AG04450 (cell line): ENCODE measurements at regions of chr1 and their contacts with region 1.

Region 1: GRCh38 chr1:152001391-152002249 is 8.0 kb upstream of the S100A10 start:
- DNase-seq: peak; percentile 94
- H3K4me3 ChIP-seq: no peak overlapping the region
- H3K27ac ChIP-seq: peak overlapping the region; percentile 81
- H3K27me3 ChIP-seq: peaks cover 26% of the 10 kb centered on the region
- CTCF ChIP-seq: peak; percentile 98

Region 2: GRCh38 chr1:151888972-151889570 is 112.5 kb before region 1 on chr1:
- CTCF ChIA-PET with region 1: interaction called, 41 read pairs
- POLR2A ChIA-PET with region 1: no interaction called
- DNase-seq: no peak
- H3K4me3 ChIP-seq: no peak overlapping the region
- H3K27ac ChIP-seq: no peak overlapping the region
- H3K27me3 ChIP-seq: no peaks in the 10 kb centered on the region
- CTCF ChIP-seq: peak; percentile 46

Region 3: DNA sequence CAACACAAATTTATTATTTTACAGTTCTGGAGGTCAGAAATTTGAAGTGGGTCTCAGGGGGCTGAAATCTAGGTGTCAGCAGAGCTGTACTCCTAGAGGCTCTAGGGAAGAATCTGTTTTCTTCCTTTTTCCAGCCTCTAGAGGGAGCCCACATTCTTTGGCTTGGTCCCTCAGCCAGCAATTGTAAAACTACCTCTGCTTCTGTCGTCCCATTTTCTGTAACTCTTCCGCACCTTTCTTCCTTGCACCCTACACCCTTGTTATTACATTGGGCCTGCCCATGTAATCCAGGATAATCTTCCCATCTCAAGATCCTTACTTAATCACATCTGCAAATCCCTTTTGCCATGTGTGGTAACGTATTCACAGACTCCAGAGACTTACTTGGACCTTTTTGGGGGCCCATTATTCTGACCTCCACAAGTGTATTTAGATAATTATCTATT is 67.5 kb before region 1 on chr1:
- CTCF ChIA-PET with region 1: interaction called, 251 read pairs
- POLR2A ChIA-PET with region 1: no interaction called
- DNase-seq: peak; percentile 16
- H3K4me3 ChIP-seq: no peak overlapping the region
- H3K27ac ChIP-seq: no peak overlapping the region
- H3K27me3 ChIP-seq: peaks cover 17% of the 10 kb centered on the region
- CTCF ChIP-seq: peak; percentile 94

Region 4: GRCh38 chr1:151968058-151968457 is 33.6 kb before region 1 on chr1:
- CTCF ChIA-PET with region 1: interaction called, 223 read pairs
- POLR2A ChIA-PET with region 1: interaction called, 3 read pairs
- DNase-seq: no peak
- H3K4me3 ChIP-seq: no peak overlapping the region
- H3K27ac ChIP-seq: no peak overlapping the region
- H3K27me3 ChIP-seq: no peaks in the 10 kb centered on the region
- CTCF ChIP-seq: peak; percentile 81

Region 5: DNA sequence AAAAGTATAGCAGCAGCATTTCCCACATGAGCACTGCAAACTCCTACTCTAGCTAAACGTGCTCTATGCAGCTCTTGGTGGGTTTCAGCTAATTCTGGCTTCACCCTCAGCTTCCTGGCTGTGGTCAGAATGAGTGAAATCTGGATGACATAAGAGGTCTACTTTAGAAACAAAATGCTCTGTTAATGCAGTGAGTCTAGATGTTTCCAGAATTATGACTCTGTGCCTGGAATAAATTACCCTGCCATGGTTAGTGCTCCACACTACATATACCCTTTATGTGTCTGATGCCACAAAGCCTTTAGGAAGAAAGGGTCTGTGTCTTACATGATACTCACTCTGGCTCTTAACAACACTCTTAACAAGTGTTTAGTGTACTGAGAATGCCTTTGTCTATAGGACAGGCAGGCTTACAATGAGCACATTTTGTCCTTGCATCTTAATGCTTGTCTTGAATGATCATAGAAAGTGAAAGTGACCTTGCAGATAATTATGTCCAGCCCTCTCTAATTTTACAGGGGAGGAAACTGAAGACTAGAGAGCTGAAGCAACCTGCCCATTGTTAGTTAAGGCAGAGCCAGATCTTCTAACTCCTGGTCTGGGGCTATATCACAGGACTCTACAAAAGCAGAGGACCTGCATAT is 17.2 kb before region 1 on chr1:
- CTCF ChIA-PET with region 1: interaction called, 22 read pairs
- POLR2A ChIA-PET with region 1: interaction called, 3 read pairs
- DNase-seq: no peak
- H3K4me3 ChIP-seq: no peak overlapping the region
- H3K27ac ChIP-seq: no peak overlapping the region
- H3K27me3 ChIP-seq: no peaks in the 10 kb centered on the region
- CTCF ChIP-seq: no peak